CD8-positive, alpha-beta T cell (primary cell): ENCODE measurements at regions of chr7 and their contacts with region 1.

Region 1: DNA sequence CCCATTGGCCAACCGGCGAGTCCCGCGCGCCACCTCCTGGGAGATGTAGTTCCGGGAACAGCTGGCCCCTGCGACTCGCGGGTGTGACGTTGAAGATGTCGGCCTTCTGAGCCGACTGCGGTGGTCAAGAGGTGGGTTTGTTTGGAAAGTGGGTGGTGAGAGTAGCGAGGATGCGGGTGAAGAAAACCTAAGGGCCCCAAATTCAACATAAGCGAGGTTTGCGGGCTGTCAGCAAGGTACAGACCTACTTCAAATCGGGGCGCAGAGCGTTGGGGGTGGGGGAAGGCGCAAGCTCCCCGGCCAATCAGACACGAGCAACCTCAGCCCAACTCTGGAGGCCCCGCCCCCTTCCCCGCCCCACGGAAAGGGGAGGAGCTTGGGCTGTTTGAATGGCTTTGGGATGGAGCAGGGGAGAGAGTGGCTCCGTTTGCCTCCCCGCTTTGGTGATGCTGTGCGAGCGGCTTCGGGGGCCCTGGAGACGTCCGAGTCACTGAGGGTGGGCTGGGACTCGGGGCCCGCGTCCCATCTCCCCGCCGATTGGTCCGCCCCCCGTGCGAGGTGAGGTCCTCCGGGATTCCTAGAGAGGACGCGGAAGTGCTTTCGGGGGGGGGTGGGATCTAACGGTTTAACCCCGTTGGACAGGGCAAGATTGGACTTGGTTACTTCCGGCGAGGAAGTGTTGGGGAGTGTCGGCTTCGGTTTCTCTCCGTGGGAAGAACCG is at the start of gene ZKSCAN5:
- DNase-seq: peak; percentile 95 to 99 (median 97)
- ATAC-seq: peak; percentile 87
- H3K4me3 ChIP-seq: peak within 1 kb of the TSS; percentile 87 to 93
- H3K4me3 Mint-ChIP-seq: peak within 1 kb of the TSS; percentile 99
- H3K27ac ChIP-seq: peak within 1 kb of the TSS; percentile 67 to 96
- H3K27ac Mint-ChIP-seq: peak within 1 kb of the TSS; percentile 97
- H3K4me1 ChIP-seq: peaks cover 29% of the 10 kb centered on the region
- H3K4me1 Mint-ChIP-seq: peaks cover 39% of the 10 kb centered on the region
- H3K27me3 ChIP-seq: no peaks in the 10 kb centered on the region
- H3K27me3 Mint-ChIP-seq: no peaks in the 10 kb centered on the region
- CTCF ChIP-seq: no peak
- total RNA-seq, gene ZKSCAN5: 6.0 to 6.2 TPM

Region 2: GRCh38 chr7:99357701-99358490 is 146.9 kb before region 1 on chr7:
- CTCF ChIA-PET with region 1: no interaction called
- POLR2A ChIA-PET with region 1: no interaction called
- intact Hi-C with region 1: no loop called
- DNase-seq: no peak
- ATAC-seq: no peak
- H3K4me3 ChIP-seq: no peak overlapping the region
- H3K4me3 Mint-ChIP-seq: no peak overlapping the region
- H3K27ac ChIP-seq: no peak overlapping the region
- H3K27ac Mint-ChIP-seq: no peak overlapping the region
- H3K4me1 ChIP-seq: no peaks in the 10 kb centered on the region
- H3K4me1 Mint-ChIP-seq: no peaks in the 10 kb centered on the region
- H3K27me3 ChIP-seq: no peaks in the 10 kb centered on the region
- H3K27me3 Mint-ChIP-seq: no peaks in the 10 kb centered on the region
- CTCF ChIP-seq: no peak

Region 3: GRCh38 chr7:99438573-99439480 is 65.9 kb before region 1 on chr7 and contains the starts of genes CPSF4 and PTCD1:
- CTCF ChIA-PET with region 1: interaction called, 5 read pairs
- POLR2A ChIA-PET with region 1: interaction called, 3 read pairs
- intact Hi-C with region 1: loop called (anchors 1 to 2 kb)
- DNase-seq: peak; percentile 75 to 93 (median 88)
- ATAC-seq: peak; percentile 78
- H3K4me3 ChIP-seq: peak within 1 kb of the TSS; percentile 66 to 98
- H3K4me3 Mint-ChIP-seq: peak within 1 kb of the TSS; percentile 94
- H3K27ac ChIP-seq: peak within 1 kb of the TSS; percentile 63 to 82
- H3K27ac Mint-ChIP-seq: peak within 1 kb of the TSS; percentile 89
- H3K4me1 ChIP-seq: peaks cover 16% of the 10 kb centered on the region
- H3K4me1 Mint-ChIP-seq: peaks cover 33% of the 10 kb centered on the region
- H3K27me3 ChIP-seq: no peaks in the 10 kb centered on the region
- H3K27me3 Mint-ChIP-seq: no peaks in the 10 kb centered on the region
- CTCF ChIP-seq: no peak
- total RNA-seq, gene CPSF4: 33.4 to 33.9 TPM
- total RNA-seq, gene PTCD1: 4.2 to 4.5 TPM

Region 4: DNA sequence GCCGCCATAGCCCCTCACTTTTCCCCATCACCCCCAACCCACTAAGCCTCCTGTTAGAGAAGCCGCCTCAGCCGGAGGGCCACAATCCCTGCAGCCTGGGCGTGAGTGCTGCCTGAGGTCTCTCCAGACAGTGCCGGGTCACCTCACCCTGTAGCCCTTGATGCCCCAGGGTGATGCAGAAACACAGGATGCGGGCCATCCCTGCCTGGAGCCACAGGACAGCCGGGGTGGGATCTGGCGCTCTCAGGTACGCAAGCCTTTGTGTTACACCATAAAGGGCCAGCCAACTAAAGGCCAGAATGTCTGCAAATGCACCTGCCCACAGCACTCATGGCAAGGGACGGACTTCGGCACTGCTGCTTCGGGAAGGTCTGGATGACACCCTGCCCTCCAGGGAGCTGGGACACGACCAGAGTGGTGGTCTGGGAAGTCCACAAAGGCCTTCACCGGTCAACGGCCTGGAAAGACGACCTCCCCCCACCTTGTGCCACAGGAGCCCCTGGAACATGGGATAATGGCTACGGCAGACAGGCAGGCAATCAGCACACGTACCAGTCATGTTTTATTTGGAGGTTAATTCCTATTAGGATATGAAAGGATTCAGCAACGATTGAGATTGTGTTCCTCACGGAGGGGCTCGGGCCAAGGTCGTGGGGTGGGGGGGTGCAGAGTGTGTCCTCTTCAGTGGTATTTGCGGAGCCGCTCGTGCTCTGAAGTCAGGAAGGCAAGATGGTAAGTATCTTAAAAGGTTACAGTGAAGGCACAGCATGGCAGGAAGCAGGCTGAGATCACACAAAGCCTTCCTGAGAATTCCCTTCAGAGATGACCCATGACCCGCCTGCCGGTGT is 46.9 kb before region 1 on chr7:
- CTCF ChIA-PET with region 1: no interaction called
- POLR2A ChIA-PET with region 1: no interaction called
- intact Hi-C with region 1: no loop called
- DNase-seq: no peak
- ATAC-seq: no peak
- H3K4me3 ChIP-seq: no peak overlapping the region
- H3K4me3 Mint-ChIP-seq: no peak overlapping the region
- H3K27ac ChIP-seq: no peak overlapping the region
- H3K27ac Mint-ChIP-seq: no peak overlapping the region
- H3K4me1 ChIP-seq: no peaks in the 10 kb centered on the region
- H3K4me1 Mint-ChIP-seq: peaks cover 25% of the 10 kb centered on the region
- H3K27me3 ChIP-seq: no peaks in the 10 kb centered on the region
- H3K27me3 Mint-ChIP-seq: no peaks in the 10 kb centered on the region
- CTCF ChIP-seq: no peak

Region 5: GRCh38 chr7:99551767-99552463 is 47.2 kb after region 1 on chr7 and contains the start of gene FAM200A:
- CTCF ChIA-PET with region 1: no interaction called
- POLR2A ChIA-PET with region 1: interaction called, 38 read pairs
- intact Hi-C with region 1: loop called (anchors 1 kb)
- DNase-seq: peak; percentile 70 to 96 (median 87)
- ATAC-seq: peak; percentile 97
- H3K4me3 ChIP-seq: peak within 1 kb of the TSS; percentile 84 to 99
- H3K4me3 Mint-ChIP-seq: peak within 1 kb of the TSS; percentile 90
- H3K27ac ChIP-seq: peak within 1 kb of the TSS; percentile 91 to 99
- H3K27ac Mint-ChIP-seq: peak within 1 kb of the TSS; percentile 96
- H3K4me1 ChIP-seq: peaks cover 27% of the 10 kb centered on the region
- H3K4me1 Mint-ChIP-seq: peaks cover 39% of the 10 kb centered on the region
- H3K27me3 ChIP-seq: no peaks in the 10 kb centered on the region
- H3K27me3 Mint-ChIP-seq: no peaks in the 10 kb centered on the region
- CTCF ChIP-seq: no peak
- total RNA-seq, gene FAM200A: 2.7 to 3.3 TPM

Region 6: GRCh38 chr7:99579956-99580777 is 75.4 kb after region 1 on chr7:
- CTCF ChIA-PET with region 1: no interaction called
- POLR2A ChIA-PET with region 1: interaction called, 3 read pairs
- intact Hi-C with region 1: loop called in 1 of 2 experiments (anchors 2 kb)
- DNase-seq: peak; percentile 24 to 79 (median 69)
- ATAC-seq: peak; percentile 91
- H3K4me3 ChIP-seq: peak overlapping the region; percentile 63 to 84
- H3K4me3 Mint-ChIP-seq: peak overlapping the region; percentile 93
- H3K27ac ChIP-seq: peak overlapping the region; percentile 4 to 42
- H3K27ac Mint-ChIP-seq: peak overlapping the region; percentile 87
- H3K4me1 ChIP-seq: no peaks in the 10 kb centered on the region
- H3K4me1 Mint-ChIP-seq: peaks cover 18% of the 10 kb centered on the region
- H3K27me3 ChIP-seq: no peaks in the 10 kb centered on the region
- H3K27me3 Mint-ChIP-seq: no peaks in the 10 kb centered on the region
- CTCF ChIP-seq: peak; percentile 54

Region 7: GRCh38 chr7:99631295-99632109 is 126.7 kb after region 1 on chr7:
- CTCF ChIA-PET with region 1: no interaction called
- POLR2A ChIA-PET with region 1: no interaction called
- intact Hi-C with region 1: no loop called
- DNase-seq: peak in 3 of 9 experiments; percentile 29 to 42 (median 39)
- ATAC-seq: peak; percentile 82
- H3K4me3 ChIP-seq: no peak overlapping the region
- H3K4me3 Mint-ChIP-seq: no peak overlapping the region
- H3K27ac ChIP-seq: no peak overlapping the region
- H3K27ac Mint-ChIP-seq: peak overlapping the region; percentile 88
- H3K4me1 ChIP-seq: no peaks in the 10 kb centered on the region
- H3K4me1 Mint-ChIP-seq: peaks cover 22% of the 10 kb centered on the region
- H3K27me3 ChIP-seq: no peaks in the 10 kb centered on the region
- H3K27me3 Mint-ChIP-seq: no peaks in the 10 kb centered on the region
- CTCF ChIP-seq: no peak

Region 8: DNA sequence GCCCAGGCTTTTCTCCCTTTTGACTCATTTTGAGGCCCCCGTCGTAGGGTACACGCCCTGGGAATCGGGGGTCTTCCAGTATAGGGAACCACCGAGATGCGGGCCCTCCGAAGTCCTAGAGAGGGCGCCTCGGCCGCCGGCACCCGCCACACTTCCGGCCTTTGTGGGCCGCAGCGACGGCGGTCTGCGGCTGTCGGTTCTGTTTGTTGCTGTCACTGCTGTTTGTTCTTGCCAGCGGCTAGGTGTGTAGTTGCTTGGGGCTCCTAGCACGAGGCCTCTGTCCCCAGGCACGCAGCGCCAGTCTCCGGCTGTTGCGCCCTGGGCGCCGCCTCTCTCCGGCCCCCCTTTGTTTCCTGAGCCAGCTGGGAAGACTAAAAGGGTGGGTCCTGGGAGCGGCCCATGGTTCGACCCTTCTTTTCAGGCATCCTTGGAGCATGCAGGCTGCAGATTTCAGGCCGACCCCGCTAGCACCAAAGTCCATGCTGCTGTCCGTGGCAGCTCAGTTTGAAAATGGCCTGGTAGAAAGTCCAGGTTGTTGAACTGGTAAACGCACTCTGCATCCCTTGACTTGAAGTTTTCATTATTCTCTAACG is 492.9 kb after region 1 on chr7:
- CTCF ChIA-PET with region 1: no interaction called
- POLR2A ChIA-PET with region 1: no interaction called
- intact Hi-C with region 1: loop called in 1 of 2 experiments (anchors 10 kb)
- DNase-seq: peak; percentile 51 to 91 (median 74)
- ATAC-seq: peak; percentile 88
- H3K4me3 ChIP-seq: peak overlapping the region; percentile 48 to 54
- H3K4me3 Mint-ChIP-seq: peak overlapping the region; percentile 73
- H3K27ac ChIP-seq: peak overlapping the region; percentile 64 to 82
- H3K27ac Mint-ChIP-seq: peak overlapping the region; percentile 92
- H3K4me1 ChIP-seq: peaks cover 12% of the 10 kb centered on the region
- H3K4me1 Mint-ChIP-seq: peaks cover 11% of the 10 kb centered on the region
- H3K27me3 ChIP-seq: no peaks in the 10 kb centered on the region
- H3K27me3 Mint-ChIP-seq: no peaks in the 10 kb centered on the region
- CTCF ChIP-seq: no peak

Region 9: DNA sequence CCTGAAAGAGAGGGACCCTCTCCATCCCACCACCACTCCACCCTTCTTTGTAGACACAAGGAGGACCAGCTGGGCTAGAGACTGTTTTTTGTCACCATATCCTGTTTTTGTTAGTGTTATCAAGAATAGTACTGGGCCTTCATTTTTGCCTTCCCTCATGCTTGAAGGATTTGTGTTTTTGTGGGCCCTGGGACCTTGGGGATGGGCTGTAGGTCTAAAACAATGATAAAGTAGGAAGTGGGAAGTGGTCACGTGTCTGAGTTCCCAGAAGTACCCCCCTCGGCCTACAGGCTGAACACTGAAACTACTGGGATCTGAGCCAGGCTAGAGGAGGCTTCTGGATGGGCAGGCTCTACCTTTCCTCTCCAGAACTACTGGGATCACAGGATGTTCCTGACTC is 1043.1 kb after region 1 on chr7:
- CTCF ChIA-PET with region 1: no interaction called
- POLR2A ChIA-PET with region 1: no interaction called
- intact Hi-C with region 1: no loop called
- DNase-seq: no peak
- ATAC-seq: no peak
- H3K4me3 ChIP-seq: no peak overlapping the region
- H3K4me3 Mint-ChIP-seq: peak overlapping the region; percentile 72
- H3K27ac ChIP-seq: peak overlapping the region in 1 of 2 experiments; percentile 84
- H3K27ac Mint-ChIP-seq: peak overlapping the region; percentile 91
- H3K4me1 ChIP-seq: peaks cover 74% of the 10 kb centered on the region
- H3K4me1 Mint-ChIP-seq: peaks cover 74% of the 10 kb centered on the region
- H3K27me3 ChIP-seq: no peaks in the 10 kb centered on the region
- H3K27me3 Mint-ChIP-seq: no peaks in the 10 kb centered on the region
- CTCF ChIP-seq: no peak